Psoas muscle (tissue), 8 donors: ENCODE measurements at regions of chr1 and their contacts with region 1.

Region 1: GRCh38 chr1:65525266-65526048 is 105.0 kb downstream of the LEPR start:
- DNase-seq: peak; percentile 35 to 59
- ATAC-seq: peak in 3 of 4 donors; percentile 42 to 65 (median 60)
- H3K4me3 ChIP-seq: peak overlapping the region; percentile 72
- H3K27ac ChIP-seq: peak overlapping the region; percentile 12
- H3K4me1 ChIP-seq: no peaks in the 10 kb centered on the region
- H3K27me3 ChIP-seq: peaks cover 0 to 20% (median 4%) of the 10 kb centered on the region in 3 donors
- CTCF ChIP-seq: no peak

Region 2: DNA sequence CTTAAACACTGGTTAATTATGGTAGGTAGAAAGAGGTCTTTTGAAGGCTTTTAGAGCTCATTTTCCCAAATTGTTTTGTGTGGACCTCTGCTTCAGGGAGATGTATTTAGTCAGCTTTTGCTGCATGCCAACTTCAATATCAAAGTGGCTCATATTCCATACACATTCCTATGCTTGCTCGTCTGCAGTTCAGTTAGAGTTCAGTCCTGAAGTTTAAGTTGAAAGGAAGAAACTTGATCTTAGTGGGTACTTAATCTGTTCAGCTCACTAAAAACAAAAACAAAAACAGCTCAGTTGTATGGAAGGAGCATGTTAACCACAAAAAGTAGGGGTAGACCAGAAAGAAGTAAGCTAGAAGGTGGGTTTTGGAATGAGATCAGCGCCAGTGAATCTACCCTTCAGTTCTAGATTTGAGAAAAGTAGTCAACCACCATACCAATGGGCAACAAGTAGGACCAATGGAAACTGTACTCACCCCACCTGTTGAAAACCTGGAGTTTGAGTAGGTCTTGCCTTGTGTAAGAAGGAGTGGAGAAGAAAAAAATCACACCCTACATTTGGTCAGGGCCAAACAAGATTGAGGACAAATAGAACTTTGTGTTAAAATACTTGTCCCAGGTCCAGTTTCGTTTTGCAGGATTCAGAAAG is 47.0 kb before region 1 on chr1:
- intact Hi-C with region 1: loop called in 1 of 2 experiments (anchors 5 kb)
- DNase-seq: no peak
- ATAC-seq: no peak
- H3K4me3 ChIP-seq: no peak overlapping the region
- H3K27ac ChIP-seq: no peak overlapping the region
- H3K4me1 ChIP-seq: no peaks in the 10 kb centered on the region
- H3K27me3 ChIP-seq: no peaks in the 10 kb centered on the region
- CTCF ChIP-seq: no peak

Region 3: GRCh38 chr1:66253330-66253921 is 728.0 kb after region 1 on chr1:
- intact Hi-C with region 1: no loop called
- DNase-seq: no peak
- ATAC-seq: peak; percentile 90 to 95 (median 94)
- H3K4me3 ChIP-seq: no peak overlapping the region
- H3K27ac ChIP-seq: no peak overlapping the region
- H3K4me1 ChIP-seq: peaks cover 19% of the 10 kb centered on the region
- H3K27me3 ChIP-seq: no peaks in the 10 kb centered on the region
- CTCF ChIP-seq: peak; percentile 87